Endothelial cell of umbilical vein (primary cell): ENCODE measurements at regions of chr1 and their contacts with region 1.

Region 1: DNA sequence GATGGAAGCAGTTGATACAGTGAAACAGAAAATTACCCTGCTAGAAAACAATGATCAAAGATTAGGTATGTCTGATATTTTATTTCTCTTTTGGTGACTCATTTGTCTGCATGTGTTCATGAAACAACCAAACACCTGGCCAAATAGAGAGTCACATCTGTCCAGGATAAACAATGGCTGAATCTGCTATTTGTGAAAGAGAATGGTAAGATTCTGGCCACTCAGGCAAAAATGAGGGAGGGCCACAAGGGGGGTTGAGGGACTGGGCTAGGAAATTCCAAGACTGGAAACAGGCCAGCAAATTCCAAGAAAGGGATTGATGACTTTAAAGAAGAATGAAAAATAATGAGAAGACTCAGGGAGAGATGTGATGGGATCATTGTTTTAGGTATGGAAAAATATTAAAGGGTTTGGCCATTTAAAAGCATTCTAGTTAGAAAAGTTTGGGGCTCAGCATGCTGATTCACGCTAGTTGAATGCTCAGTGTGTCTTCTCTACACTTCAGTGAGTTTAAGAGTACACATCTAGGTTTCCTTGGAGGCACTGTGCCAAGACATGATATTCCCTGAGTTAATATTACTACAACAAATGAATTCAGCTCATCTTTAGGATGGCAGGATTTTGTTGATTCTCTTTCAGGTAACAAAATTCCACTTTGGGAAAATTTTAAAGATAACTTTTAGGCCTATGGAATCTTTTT is 44.9 kb downstream of the TRAF5 start:
- DNase-seq: peak; percentile 86
- H3K4me3 ChIP-seq: no peak overlapping the region
- H3K27ac ChIP-seq: peak overlapping the region; percentile 1
- H3K4me1 ChIP-seq: no peaks in the 10 kb centered on the region
- H3K27me3 ChIP-seq: no peaks in the 10 kb centered on the region
- CTCF ChIP-seq: no peak
- POLR2A ChIP-seq: no peak

Region 2: DNA sequence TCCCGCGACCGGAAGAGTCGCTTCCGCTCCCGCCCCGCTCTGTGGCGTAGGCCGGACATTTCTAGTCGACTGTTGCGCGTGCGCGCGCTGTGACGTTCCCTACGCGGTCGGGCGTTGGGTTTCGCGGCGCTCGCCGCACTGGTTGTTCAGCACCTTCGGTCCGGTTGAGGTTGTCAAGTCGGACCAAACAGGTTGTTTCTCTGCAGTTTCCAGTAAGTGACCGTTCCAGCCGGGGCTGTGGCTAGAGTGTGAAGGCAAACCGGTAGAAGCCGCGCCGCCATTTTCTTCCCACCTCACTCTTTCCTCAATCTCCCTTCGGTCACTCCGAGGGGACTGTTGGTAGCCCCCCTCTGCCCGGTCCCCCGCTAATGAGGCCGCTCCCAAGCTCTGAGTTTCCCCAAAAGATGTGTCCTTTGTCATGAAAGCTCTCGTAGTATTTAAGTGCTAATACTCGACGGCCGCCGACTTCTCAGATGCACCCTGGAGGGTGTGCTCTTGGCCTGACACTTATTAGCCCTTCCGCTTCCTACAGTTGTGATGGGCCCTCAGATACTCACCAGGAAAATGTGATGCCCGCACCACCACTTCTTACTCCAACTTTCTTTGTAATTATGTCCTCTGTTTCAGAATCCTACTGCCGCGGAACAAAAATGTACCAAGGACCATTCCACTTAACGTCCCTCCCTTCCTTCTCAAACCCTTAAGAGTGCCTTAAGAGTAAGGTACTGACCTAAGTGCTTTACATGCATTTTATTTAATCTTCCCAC is 11.3 kb after region 1 on chr1:
- CTCF ChIA-PET with region 1: no interaction called
- POLR2A ChIA-PET with region 1: interaction called, 3 read pairs
- dilution Hi-C with region 1: no loop called
- intact Hi-C with region 1: loop called (anchors 1 kb)
- DNase-seq: peak; percentile 94
- H3K4me3 ChIP-seq: peak overlapping the region; percentile 50 to 77 (median 56)
- H3K27ac ChIP-seq: peak overlapping the region; percentile 96
- H3K4me1 ChIP-seq: peaks cover 11% of the 10 kb centered on the region
- H3K27me3 ChIP-seq: no peaks in the 10 kb centered on the region
- CTCF ChIP-seq: no peak
- POLR2A ChIP-seq: peak; percentile 98